Activated B cell treated with CpG ODN at 0.5 μM for 24 hours (primary cell): ENCODE measurements at regions of chr19 and their contacts with region 1.

Region 1: DNA sequence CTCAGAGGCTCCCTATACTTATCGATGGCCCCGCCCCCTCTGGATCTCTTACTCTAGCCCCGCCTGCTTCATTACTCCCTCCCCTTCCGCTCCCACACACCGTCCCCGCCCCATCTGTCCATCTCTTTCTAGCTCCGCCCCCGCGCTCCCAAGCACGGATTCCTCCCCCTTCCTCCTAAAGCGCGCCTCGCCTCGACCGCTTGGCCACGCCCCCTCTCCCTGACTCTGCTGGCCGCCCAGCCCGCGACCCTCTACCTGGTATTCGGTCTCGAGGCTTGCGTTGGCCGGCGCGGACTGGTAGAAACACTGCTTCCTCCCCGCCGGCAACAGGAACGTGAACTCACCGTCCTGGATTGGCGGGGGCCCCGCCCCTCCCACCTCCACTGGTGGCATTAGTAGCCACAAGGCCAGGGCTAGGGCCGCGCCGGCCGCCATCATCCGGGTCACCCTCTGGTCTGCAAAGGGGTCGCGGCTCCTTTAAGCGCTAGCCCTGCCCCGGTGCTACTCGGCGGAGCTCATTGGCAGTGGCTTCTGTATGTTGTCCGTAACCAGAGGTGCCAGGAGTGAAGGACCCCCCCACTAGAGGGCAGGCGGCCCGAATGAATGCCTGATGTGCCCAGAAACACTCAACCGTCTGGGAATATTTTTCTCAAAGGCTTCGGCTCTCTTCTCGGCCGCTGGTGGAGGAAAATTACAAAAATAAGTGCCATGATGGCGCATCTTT is at the start of gene TMED1:
- DNase-seq: peak; percentile 86
- ATAC-seq: peak; percentile 87
- H3K4me3 Mint-ChIP-seq: peak within 1 kb of the TSS; percentile 97
- H3K27ac Mint-ChIP-seq: peak within 1 kb of the TSS; percentile 99
- H3K4me1 Mint-ChIP-seq: peaks cover 18% of the 10 kb centered on the region
- H3K27me3 Mint-ChIP-seq: no peaks in the 10 kb centered on the region
- CTCF ChIP-seq: no peak
- total RNA-seq, gene TMED1: 11.9 and 15.7 TPM in 2 replicates

Region 2: DNA sequence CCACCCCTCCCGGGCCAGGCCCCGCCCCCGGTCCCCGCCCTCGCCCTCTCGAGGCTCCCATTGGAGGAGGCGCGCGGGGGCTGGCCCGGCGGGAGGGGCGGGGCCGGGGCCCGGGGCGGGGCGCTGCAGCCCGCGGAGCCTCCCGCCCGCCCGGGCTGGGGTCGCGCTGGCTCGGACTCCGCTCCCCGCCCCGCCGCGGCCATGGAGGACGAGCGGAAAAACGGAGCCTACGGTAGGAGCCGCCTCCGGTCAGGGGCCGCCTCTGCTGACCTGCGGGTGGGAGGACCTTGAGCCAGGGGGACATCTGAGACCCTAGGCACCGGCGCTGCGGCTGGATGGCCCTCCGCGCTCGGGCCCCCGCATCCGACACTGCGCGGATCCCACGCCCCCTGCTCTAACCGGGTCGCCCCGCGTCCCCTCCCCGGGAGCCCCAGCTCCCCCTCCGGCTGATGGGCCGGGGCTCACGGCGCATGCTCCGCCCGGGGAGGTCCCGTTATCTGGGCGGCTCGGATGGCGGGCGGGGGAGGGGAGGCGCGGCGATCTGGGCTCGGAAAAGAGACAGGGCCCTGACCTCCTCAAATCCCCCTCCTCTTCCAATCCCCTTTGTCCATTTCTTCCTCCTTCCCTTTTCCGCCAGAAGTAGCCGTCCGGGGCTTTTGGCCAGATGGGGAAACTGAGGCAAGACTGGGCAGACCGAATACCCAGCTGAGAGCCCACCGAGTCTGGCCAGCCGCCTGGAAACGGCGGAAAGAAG is 233.4 kb before region 1 on chr19:
- CTCF ChIA-PET with region 1: no interaction called
- POLR2A ChIA-PET with region 1: interaction called, 15 read pairs
- intact Hi-C with region 1: loop called (anchors 2 kb)
- DNase-seq: peak; percentile 86
- ATAC-seq: peak; percentile 73
- H3K4me3 Mint-ChIP-seq: peak overlapping the region; percentile 97
- H3K27ac Mint-ChIP-seq: peak overlapping the region; percentile 98
- H3K4me1 Mint-ChIP-seq: peaks cover 39% of the 10 kb centered on the region
- H3K27me3 Mint-ChIP-seq: no peaks in the 10 kb centered on the region
- CTCF ChIP-seq: no peak

Region 3: GRCh38 chr19:10701955-10702525 is 133.9 kb before region 1 on chr19:
- CTCF ChIA-PET with region 1: no interaction called
- POLR2A ChIA-PET with region 1: interaction called, 11 read pairs
- intact Hi-C with region 1: loop called (anchors 1 kb)
- DNase-seq: peak; percentile 31
- ATAC-seq: peak; percentile 29
- H3K4me3 Mint-ChIP-seq: peak overlapping the region; percentile 93
- H3K27ac Mint-ChIP-seq: peak overlapping the region; percentile 85
- H3K4me1 Mint-ChIP-seq: peaks cover 12% of the 10 kb centered on the region
- H3K27me3 Mint-ChIP-seq: peaks cover 2% of the 10 kb centered on the region
- CTCF ChIP-seq: no peak

Region 4: DNA sequence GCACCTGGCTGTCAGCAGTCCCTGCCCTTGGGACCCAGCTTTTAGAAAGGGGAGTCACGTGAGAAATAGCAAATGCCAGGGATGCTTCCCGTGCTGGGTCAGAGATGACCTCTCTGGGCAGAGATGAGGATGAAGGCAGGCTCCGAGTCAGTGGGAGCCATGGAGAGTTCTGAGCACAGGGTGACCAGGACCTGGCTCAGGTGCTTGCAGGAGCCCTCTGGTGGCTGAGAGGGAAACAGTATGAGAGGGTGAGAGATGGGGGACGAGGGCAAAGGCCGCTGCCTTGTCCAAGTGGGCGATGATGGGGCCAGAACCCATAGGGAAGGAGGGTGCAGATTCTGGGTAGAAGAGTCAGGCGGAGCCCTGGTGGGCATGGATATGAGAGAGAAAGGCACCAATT is 15.7 kb before region 1 on chr19:
- CTCF ChIA-PET with region 1: interaction called, 4 read pairs
- POLR2A ChIA-PET with region 1: interaction called, 11 read pairs
- intact Hi-C with region 1: no loop called
- DNase-seq: no peak
- ATAC-seq: peak; percentile 47
- H3K4me3 Mint-ChIP-seq: no peak overlapping the region
- H3K27ac Mint-ChIP-seq: peak overlapping the region; percentile 57
- H3K4me1 Mint-ChIP-seq: no peaks in the 10 kb centered on the region
- H3K27me3 Mint-ChIP-seq: no peaks in the 10 kb centered on the region
- CTCF ChIP-seq: no peak

Region 5: DNA sequence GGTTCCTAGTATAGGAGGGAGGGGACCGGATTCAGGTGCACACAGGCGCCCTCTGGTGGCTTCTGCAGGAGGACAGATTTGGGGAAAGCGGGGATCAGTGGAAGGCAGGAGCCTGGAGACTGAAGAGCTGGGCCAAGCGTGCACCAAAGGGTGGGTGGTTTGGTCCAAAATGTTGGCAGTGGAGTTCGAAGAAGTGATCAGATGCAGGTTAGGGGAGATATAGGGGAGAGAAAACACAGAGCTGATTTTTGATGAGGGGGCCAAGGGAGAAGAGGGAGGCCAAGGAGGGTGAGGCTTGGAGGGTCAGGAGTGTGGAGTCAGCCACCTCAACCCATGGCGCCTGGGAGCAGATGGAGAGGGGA is 28.6 kb after region 1 on chr19:
- CTCF ChIA-PET with region 1: interaction called, 27 read pairs
- POLR2A ChIA-PET with region 1: interaction called, 28 read pairs
- intact Hi-C with region 1: loop called (anchors 1 kb)
- DNase-seq: peak; percentile 68
- ATAC-seq: peak; percentile 68
- H3K4me3 Mint-ChIP-seq: peak overlapping the region; percentile 21
- H3K27ac Mint-ChIP-seq: peak overlapping the region; percentile 8
- H3K4me1 Mint-ChIP-seq: peaks cover 28% of the 10 kb centered on the region
- H3K27me3 Mint-ChIP-seq: no peaks in the 10 kb centered on the region
- CTCF ChIP-seq: peak; percentile 27

Region 6: GRCh38 chr19:10870955-10871603 is 35.2 kb after region 1 on chr19 and contains the start of gene CARM1:
- CTCF ChIA-PET with region 1: interaction called, 7 read pairs
- POLR2A ChIA-PET with region 1: interaction called, 28 read pairs
- intact Hi-C with region 1: loop called (anchors 1 kb)
- DNase-seq: peak; percentile 100
- ATAC-seq: peak; percentile 84
- H3K4me3 Mint-ChIP-seq: peak within 1 kb of the TSS; percentile 83
- H3K27ac Mint-ChIP-seq: peak within 1 kb of the TSS; percentile 88
- H3K4me1 Mint-ChIP-seq: peaks cover 44% of the 10 kb centered on the region
- H3K27me3 Mint-ChIP-seq: no peaks in the 10 kb centered on the region
- CTCF ChIP-seq: no peak
- total RNA-seq, gene CARM1: 32.3 and 39.1 TPM in 2 replicates

Region 7: DNA sequence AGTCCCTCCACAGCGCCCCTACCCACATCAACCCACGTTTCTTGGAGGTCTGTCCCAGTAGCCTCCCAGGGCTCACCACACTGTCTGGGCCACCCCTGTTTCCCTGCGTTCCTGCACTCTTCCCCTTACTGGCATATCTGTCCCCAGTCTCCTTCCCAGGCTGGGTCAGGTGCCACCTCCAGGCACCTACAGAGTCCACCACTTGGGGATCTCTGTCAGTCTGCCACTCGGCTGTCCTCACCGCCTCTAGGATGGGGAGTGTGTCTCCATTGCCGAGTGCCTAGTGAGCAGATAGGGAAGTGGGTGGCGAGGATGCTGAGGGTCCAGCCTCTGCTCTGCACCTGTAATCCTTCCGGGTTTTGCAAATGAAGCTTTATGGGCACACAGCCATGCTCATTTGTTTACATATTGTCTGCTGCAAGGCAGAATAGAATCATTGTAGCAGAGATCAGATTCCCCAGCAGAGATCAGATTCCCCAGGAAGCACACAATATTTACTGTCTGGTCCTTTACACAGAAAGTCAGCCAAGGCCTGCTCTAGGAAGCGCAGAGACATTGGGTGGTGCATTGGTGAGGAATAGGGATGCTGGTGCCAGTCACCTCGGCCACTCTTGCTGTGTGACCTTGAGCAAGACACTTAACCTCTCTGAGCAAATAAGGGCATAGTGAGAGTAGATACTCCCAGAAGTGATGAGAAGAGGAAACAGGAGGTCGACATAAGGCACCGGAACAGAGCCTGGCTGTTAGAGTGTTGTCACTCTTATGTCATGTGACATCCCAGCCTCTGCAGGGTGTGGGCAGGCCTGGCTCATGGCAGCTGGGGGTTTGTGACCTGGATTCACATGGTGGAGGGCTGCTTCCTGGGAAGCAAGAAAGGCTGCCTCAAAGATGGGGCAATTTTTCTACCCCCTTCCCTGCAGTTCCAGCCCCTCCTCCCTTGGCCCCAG is 60.9 kb after region 1 on chr19:
- CTCF ChIA-PET with region 1: no interaction called
- POLR2A ChIA-PET with region 1: no interaction called
- intact Hi-C with region 1: no loop called
- DNase-seq: no peak
- ATAC-seq: no peak
- H3K4me3 Mint-ChIP-seq: no peak overlapping the region
- H3K27ac Mint-ChIP-seq: no peak overlapping the region
- H3K4me1 Mint-ChIP-seq: peaks cover 9% of the 10 kb centered on the region
- H3K27me3 Mint-ChIP-seq: no peaks in the 10 kb centered on the region
- CTCF ChIP-seq: no peak

Region 8: DNA sequence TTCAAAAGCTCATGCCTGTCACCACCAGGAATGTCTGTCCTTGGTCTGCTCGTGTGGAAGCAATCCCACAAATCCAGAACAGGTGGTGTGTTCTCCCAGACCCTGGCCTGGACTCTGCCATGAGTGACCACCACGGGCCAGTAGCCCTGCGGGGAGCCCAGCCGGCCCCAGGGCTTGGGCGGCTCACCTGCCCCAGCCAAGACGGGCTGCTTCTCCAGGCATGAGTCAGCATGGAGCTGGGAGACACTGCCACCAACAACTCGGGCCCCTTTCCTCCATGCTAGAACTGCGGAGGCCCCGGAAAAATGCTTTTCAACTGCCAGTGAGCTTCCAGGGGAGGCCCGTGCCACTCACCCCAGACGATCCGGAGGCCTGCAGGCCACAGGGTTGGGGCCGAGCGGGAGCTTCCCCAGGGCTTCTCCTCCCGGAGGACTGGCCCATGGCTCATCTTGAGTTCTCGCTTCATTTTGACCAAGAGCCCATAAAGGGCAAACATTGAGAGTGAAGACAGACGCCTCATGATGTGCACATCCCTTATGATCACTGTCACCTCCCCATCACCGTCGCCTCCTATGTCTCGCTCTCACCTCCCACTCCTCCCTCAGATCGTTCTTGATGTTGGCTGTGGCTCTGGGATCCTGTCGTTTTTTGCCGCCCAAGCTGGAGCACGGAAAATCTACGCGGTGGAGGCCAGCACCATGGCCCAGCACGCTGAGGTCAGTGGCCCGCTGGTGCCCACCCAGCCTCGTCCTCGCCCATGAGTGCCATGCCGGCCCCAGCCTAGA is 75.9 kb after region 1 on chr19:
- CTCF ChIA-PET with region 1: no interaction called
- POLR2A ChIA-PET with region 1: no interaction called
- intact Hi-C with region 1: no loop called
- DNase-seq: no peak
- ATAC-seq: no peak
- H3K4me3 Mint-ChIP-seq: no peak overlapping the region
- H3K27ac Mint-ChIP-seq: no peak overlapping the region
- H3K4me1 Mint-ChIP-seq: no peaks in the 10 kb centered on the region
- H3K27me3 Mint-ChIP-seq: no peaks in the 10 kb centered on the region
- CTCF ChIP-seq: no peak